Calu3 (cell line): ENCODE measurements at regions of chr2 and their contacts with region 1.

Region 1: DNA sequence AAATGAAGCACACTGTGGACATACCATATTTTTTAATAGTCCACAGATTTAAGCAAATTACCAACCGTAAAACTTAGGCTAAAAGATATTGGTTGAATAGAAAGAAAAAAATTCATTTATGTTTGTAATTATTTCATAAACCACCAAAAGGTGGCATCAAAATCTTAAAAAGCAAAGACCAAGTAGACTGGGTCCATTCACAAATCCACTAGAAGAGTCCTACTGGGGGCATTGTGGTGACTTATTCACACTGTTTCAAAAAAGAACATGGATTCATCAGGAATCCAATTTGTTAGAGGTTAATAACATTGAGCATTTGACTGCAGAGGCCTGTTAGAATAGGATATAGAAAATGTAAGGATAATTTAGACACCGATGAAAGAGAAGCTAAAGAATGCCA is 194.9 kb upstream of the KYNU start:
- DNase-seq: no peak
- H3K4me3 Mint-ChIP-seq: no peak overlapping the region
- H3K27ac Mint-ChIP-seq: peak overlapping the region; percentile 54
- H3K4me1 Mint-ChIP-seq: peaks cover 16% of the 10 kb centered on the region
- H3K27me3 Mint-ChIP-seq: no peaks in the 10 kb centered on the region
- CTCF ChIP-seq: no peak

Region 2: DNA sequence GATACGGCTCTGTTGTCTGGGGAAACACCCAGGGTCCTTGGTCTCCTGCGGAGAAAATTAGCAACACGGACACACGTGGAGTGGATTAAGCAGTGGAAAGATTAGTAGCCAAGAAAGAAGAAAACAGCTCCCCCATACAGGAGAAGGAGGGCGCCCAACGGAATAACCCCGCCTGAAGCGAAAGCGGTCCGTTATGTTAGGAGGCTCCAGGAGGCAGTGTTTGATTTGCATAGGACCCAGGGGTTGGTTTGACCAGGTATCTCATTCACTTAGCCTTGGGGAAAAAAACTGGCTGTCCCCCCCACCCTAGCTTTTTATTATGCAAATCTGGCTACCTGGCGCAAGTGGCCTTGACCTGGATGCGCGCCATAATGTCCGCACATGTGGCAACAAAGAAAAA is 24.8 kb after region 1 on chr2:
- CTCF ChIA-PET with region 1: no interaction called
- intact Hi-C with region 1: no loop called
- DNase-seq: no peak
- H3K4me3 Mint-ChIP-seq: no peak overlapping the region
- H3K27ac Mint-ChIP-seq: no peak overlapping the region
- H3K4me1 Mint-ChIP-seq: no peaks in the 10 kb centered on the region
- H3K27me3 Mint-ChIP-seq: no peaks in the 10 kb centered on the region
- CTCF ChIP-seq: no peak

Region 3: GRCh38 chr2:142980561-142981378 is 298.2 kb after region 1 on chr2:
- CTCF ChIA-PET with region 1: no interaction called
- intact Hi-C with region 1: loop called (anchors 2 kb)
- DNase-seq: no peak
- H3K4me3 Mint-ChIP-seq: peak overlapping the region; percentile 31
- H3K27ac Mint-ChIP-seq: peak overlapping the region; percentile 66
- H3K4me1 Mint-ChIP-seq: peaks cover 21% of the 10 kb centered on the region
- H3K27me3 Mint-ChIP-seq: no peaks in the 10 kb centered on the region
- CTCF ChIP-seq: peak; percentile 47

Region 4: DNA sequence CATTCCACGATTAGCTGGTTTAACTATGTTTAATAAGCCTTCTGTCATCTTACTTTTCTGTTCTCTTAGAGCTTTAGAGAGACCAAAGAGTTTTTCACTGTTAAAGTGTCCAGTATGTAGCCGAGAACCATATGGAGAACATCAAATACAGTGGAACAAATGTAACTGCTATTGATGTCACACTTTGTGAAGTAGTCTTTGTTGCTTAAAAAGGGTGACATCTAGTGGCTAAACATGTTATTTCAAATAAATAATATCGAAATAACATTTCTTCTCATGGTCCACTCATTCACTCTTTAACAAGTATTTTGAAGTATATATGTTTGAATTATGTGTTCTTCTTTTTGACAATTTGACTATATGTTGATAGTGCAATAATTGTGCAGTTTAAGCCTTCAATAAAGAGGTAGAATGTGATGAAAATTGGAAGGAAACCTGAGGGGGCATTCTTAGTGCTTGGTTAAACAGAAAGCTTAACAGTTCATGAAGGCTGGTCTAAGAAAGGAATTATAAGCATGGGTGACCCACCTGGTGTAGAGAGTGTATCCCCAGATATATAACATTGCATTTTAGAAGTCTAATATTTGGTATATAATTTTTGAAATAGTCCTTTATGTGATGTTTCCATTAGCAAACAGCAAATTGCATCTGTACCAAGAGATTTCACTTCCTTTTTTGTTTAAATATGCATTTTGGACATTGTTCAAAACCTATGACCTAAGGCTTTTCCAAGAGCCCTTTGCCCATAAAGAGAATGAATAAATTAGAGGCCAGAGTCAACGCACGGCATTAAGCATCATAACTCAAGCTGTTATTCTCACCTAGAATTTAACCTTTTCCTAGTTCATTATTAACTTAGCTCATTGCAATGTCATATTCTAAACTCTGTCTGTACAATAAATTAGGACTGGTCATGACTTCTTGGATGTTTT is 307.0 kb after region 1 on chr2:
- CTCF ChIA-PET with region 1: no interaction called
- intact Hi-C with region 1: loop called (anchors 1 kb)
- DNase-seq: no peak
- H3K4me3 Mint-ChIP-seq: no peak overlapping the region
- H3K27ac Mint-ChIP-seq: no peak overlapping the region
- H3K4me1 Mint-ChIP-seq: peaks cover 28% of the 10 kb centered on the region
- H3K27me3 Mint-ChIP-seq: no peaks in the 10 kb centered on the region
- CTCF ChIP-seq: peak; percentile 50